ENCODE measurements at regions of chr12 and their contacts with region 1.

Region 1: GRCh38 chr12:107685360-107686248 is at the start of gene PWP1:
- DNase-seq: peak; percentile 94
- H3K4me3 Mint-ChIP-seq: peak within 1 kb of the TSS; percentile 86
- H3K27ac Mint-ChIP-seq: peak within 1 kb of the TSS; percentile 94
- H3K4me1 Mint-ChIP-seq: peaks cover 21% of the 10 kb centered on the region
- H3K27me3 Mint-ChIP-seq: peaks cover under 1% of the 10 kb centered on the region
- total RNA-seq, gene PWP1: 50.5 and 52.9 TPM in 2 replicates

Region 2: DNA sequence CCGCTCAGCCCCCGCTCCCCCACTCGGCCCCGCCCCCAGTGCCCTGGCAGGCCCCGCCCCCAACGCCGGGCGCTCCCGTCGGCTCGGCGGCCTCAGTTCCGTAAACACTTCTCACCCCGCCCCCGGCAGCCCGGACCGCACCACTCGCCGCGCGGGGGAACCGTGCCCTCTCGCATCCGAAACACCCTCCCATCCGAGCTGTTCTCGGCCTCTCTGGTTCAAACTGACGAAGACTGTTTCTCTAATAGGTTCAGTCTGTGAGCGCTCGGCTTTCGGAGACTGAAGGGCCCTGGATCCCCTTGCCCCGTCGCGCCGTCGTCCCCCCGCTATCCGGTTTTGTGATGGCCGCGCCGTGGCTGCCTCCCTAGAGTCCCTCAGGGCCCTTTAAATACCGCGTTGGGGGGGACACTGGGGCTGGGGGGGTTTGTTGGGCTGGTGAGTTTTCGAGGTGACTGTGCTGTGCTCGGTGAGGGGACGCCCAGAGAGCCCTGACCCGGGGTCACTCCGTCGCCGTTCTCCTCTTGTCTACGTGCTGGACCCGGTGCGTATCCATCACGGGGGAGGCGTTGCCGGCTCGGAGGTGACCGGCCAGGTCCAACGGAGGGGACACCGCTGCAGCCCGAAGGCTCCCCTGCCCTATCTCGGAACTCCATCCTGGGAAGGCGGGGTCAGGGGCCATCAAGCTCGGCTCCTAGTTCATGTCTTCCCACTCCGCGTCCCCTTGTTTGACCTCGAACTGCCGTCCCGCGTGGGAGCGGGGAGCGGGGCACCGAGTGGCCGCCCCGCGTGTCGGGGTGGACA is 1383.0 kb before region 1 on chr12 and contains the start of gene TCP11L2:
- intact Hi-C with region 1: loop called (anchors 10 kb)
- DNase-seq: peak; percentile 83
- H3K4me3 Mint-ChIP-seq: peak within 1 kb of the TSS; percentile 94
- H3K27ac Mint-ChIP-seq: peak within 1 kb of the TSS; percentile 100
- H3K4me1 Mint-ChIP-seq: peaks cover 37% of the 10 kb centered on the region
- H3K27me3 Mint-ChIP-seq: no peaks in the 10 kb centered on the region
- total RNA-seq, gene TCP11L2: 4.8 and 5.1 TPM in 2 replicates

Region 3: GRCh38 chr12:107760809-107761501 is 75.4 kb after region 1 on chr12 and contains the start of gene PRDM4:
- intact Hi-C with region 1: loop called (anchors 1 kb)
- DNase-seq: peak; percentile 91
- H3K4me3 Mint-ChIP-seq: peak within 1 kb of the TSS; percentile 91
- H3K27ac Mint-ChIP-seq: peak within 1 kb of the TSS; percentile 82
- H3K4me1 Mint-ChIP-seq: peaks cover 27% of the 10 kb centered on the region
- H3K27me3 Mint-ChIP-seq: peaks cover 3% of the 10 kb centered on the region
- total RNA-seq, gene PRDM4: 30.5 and 34.4 TPM in 2 replicates

Measured in activated T-helper 2 cell treated with anti-CD3 and anti-CD28 coated beads, Interferon-gamma antibody, Interleukin-2, Interleukin-4, amounts not matched to agents 10 μg/mL and 5 μg/mL and 100 μg/mL, durations not matched to agents 14 hours and 24 hours and 36 hours (primary cell).